ENCODE measurements at regions of chr1 and their contacts with region 1.

Region 1: DNA sequence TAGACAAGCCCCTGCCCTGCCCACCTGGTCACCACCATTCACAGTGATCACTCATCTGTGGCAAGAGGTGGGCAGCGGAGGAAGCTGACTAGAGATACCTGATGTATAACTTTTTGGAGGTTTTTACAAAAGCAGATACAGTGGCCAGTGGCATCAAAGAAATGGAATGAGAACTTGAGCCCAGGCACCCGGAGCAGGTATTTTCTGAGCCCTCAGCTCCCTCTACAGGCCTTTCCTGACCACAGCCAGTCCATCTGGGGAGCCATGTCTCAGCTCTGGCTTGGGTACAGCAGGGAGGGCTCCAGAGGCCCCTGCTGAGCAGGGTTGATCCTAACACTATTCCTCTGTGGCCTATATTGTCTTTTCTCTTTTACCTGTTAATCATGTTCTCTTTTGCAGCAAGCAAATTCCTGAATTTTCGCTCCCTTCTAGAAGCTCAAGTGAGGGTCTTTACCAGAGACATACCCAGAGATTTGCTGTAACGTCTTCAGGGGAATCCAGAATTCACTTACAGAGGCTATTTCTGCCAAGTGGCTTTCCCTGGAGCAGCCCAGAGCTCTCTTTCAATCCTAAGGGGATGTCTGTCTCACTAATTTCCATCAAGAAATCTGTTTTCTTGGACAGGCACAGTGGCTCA is 27.3 kb downstream of the GPR157 start:
- DNase-seq: peak; percentile 61 to 77 (median 73)
- H3K4me3 ChIP-seq: no peak overlapping the region
- H3K27ac ChIP-seq: no peak overlapping the region
- H3K4me1 ChIP-seq: no peaks in the 10 kb centered on the region
- H3K27me3 ChIP-seq: no peaks in the 10 kb centered on the region

Region 2: GRCh38 chr1:8913111-8913856 is 188.3 kb before region 1 on chr1:
- CTCF ChIA-PET with region 1: interaction called, 25 read pairs
- POLR2A ChIA-PET with region 1: no interaction called
- DNase-seq: no peak
- H3K4me3 ChIP-seq: no peak overlapping the region
- H3K27ac ChIP-seq: no peak overlapping the region
- H3K4me1 ChIP-seq: peaks cover 0 to 1% (median under 1%) of the 10 kb centered on the region in 4 experiments
- H3K27me3 ChIP-seq: no peaks in the 10 kb centered on the region

Region 3: GRCh38 chr1:9069326-9070100 is 32.1 kb before region 1 on chr1 and contains the start of gene SLC2A5:
- CTCF ChIA-PET with region 1: interaction called, 12 read pairs
- POLR2A ChIA-PET with region 1: no interaction called
- DNase-seq: peak; percentile 70 to 87 (median 83)
- H3K4me3 ChIP-seq: peak within 1 kb of the TSS in 6 of 7 experiments; percentile 49 to 60 (median 53)
- H3K27ac ChIP-seq: peak within 1 kb of the TSS; percentile 19 to 56
- H3K4me1 ChIP-seq: peaks cover 22 to 77% (median 67%) of the 10 kb centered on the region in 4 experiments
- H3K27me3 ChIP-seq: no peaks in the 10 kb centered on the region

Region 4: GRCh38 chr1:9075022-9075421 is 26.6 kb before region 1 on chr1:
- CTCF ChIA-PET with region 1: interaction called, 12 read pairs
- POLR2A ChIA-PET with region 1: no interaction called
- DNase-seq: peak; percentile 70 to 94 (median 89)
- H3K4me3 ChIP-seq: peak overlapping the region in 2 of 7 experiments; percentile 25 to 27
- H3K27ac ChIP-seq: peak overlapping the region in 1 of 2 experiments; percentile 45
- H3K4me1 ChIP-seq: peaks cover 27 to 72% (median 67%) of the 10 kb centered on the region in 4 experiments
- H3K27me3 ChIP-seq: no peaks in the 10 kb centered on the region

Region 5: DNA sequence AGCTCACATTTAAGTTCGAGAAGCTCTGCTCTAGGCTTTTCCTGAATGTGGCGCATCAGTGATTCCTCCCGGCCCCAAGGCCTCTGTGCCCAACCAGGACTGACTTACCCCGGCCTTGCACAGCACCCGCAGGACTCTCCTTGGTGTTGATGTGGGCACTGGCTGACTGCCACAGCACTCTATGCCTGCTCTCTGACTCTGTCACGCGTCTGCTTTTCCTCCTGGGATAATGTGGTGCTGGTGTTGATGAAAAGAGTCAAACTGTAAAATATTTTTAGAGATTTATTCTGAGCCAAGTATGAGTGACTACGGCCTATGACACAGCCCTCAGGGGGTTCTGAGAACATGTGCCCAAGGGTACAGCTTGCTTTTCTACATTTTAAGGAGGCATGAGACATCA is 16.7 kb before region 1 on chr1:
- CTCF ChIA-PET with region 1: interaction called, 27 read pairs
- POLR2A ChIA-PET with region 1: no interaction called
- DNase-seq: peak in 2 of 3 donors; percentile 48 to 57
- H3K4me3 ChIP-seq: no peak overlapping the region
- H3K27ac ChIP-seq: peak overlapping the region in 1 of 2 experiments; percentile 36
- H3K4me1 ChIP-seq: peaks cover 23 to 59% (median 46%) of the 10 kb centered on the region in 4 experiments
- H3K27me3 ChIP-seq: no peaks in the 10 kb centered on the region

Measured in common myeloid progenitor, CD34-positive (primary cell).